Activated T-helper 1 cell treated with anti-CD3 and anti-CD28 coated beads, Interleukin-12 subunit alpha, Interleukin-12 subunit beta, Interleukin-2, Interleukin-4 antibody, amounts not matched to agents 30 ng/mL and 10 ng/mL and 1 ng/mL, durations not matched to agents 14 hours and 24 hours and 36 hours (primary cell): ENCODE measurements at regions of chr20 and their contacts with region 1.

Region 1: GRCh38 chr20:38057351-38057972 is 23.9 kb downstream of the RPRD1B start:
- DNase-seq: peak; percentile 56
- H3K4me3 Mint-ChIP-seq: no peak overlapping the region
- H3K27ac Mint-ChIP-seq: peak overlapping the region; percentile 59
- H3K4me1 Mint-ChIP-seq: peaks cover 30% of the 10 kb centered on the region
- H3K27me3 Mint-ChIP-seq: no peaks in the 10 kb centered on the region

Region 2: GRCh38 chr20:37564388-37565133 is 492.9 kb before region 1 on chr20:
- intact Hi-C with region 1: loop called (anchors 1 kb)
- DNase-seq: peak; percentile 20
- H3K4me3 Mint-ChIP-seq: no peak overlapping the region
- H3K27ac Mint-ChIP-seq: no peak overlapping the region
- H3K4me1 Mint-ChIP-seq: no peaks in the 10 kb centered on the region
- H3K27me3 Mint-ChIP-seq: peaks cover 32% of the 10 kb centered on the region